ENCODE measurements at regions of chr6 and their contacts with region 1.

Region 1: DNA sequence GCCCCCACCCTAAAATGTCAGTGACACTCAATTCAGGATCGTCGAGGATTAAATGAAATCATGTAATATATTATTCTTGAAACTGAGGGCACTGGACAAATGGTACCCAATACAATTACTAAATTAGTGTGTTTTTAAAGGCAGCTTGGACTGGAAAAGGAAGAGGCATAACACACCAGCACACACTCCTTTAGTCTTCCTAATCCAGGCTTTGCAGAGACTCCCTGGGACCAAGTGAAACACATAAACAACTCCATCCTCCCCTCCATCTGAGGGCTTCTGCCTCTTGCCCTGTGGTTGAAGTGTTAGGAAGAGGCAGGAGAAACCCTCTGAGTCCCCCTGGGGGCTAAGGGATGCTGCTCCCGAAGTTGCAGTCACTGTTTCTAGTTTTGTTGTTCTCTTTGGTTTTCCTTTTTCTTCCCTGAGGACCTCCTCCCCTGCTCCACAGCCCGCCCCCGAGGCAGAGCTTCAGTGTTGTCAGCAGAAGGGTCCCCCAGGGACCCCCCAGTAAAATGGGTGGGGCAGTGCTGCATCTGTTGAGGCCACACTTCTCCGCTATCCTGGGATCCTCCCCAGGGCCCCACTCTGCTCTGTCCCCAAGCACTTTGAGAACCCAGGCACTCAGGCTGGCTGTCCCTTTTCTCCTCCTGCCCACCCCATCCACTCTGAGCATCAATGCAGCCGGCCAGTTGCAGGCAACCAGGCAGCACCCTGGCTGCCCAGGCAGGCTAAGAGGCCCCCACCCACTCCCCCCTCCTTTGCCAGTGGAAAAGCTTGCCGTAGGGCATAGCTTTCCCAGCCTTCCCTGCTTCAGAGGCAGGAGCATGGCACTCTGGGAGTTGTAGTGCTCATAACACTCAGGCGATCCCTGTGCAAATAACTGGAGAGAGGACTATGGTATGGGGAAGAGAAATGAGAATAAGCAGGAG is 5.9 kb downstream of the TMEM63B start:
- DNase-seq: no peak
- ATAC-seq: peak; percentile 76
- H3K4me3 ChIP-seq: no peak overlapping the region
- H3K27ac ChIP-seq: no peak overlapping the region
- H3K4me1 ChIP-seq: peaks cover 4% of the 10 kb centered on the region; the same call in 1 of the 2 replicates
- H3K27me3 ChIP-seq: no peaks in the 10 kb centered on the region
- CTCF ChIP-seq: no peak
- EP300 ChIP-seq: no peak
- POLR2A ChIP-seq: no peak
- RAD21 ChIP-seq: no peak

Region 2: GRCh38 chr6:44122816-44123215 is 10.5 kb before region 1 on chr6:
- CTCF ChIA-PET with region 1: interaction called, 11 read pairs
- POLR2A ChIA-PET with region 1: interaction called, 3 read pairs
- RAD21 ChIA-PET with region 1: no interaction called
- SMC1A ChIA-PET with region 1: interaction called, 6 read pairs
- in situ Hi-C with region 1: no loop called
- intact Hi-C with region 1: no loop called
- DNase-seq: peak; percentile 25
- ATAC-seq: no peak
- H3K4me3 ChIP-seq: peak overlapping the region; percentile 46; the same call in 1 of the 2 replicates
- H3K27ac ChIP-seq: peak overlapping the region; percentile 31
- H3K4me1 ChIP-seq: peaks cover 33% of the 10 kb centered on the region
- H3K27me3 ChIP-seq: no peaks in the 10 kb centered on the region
- CTCF ChIP-seq: no peak
- EP300 ChIP-seq: no peak
- POLR2A ChIP-seq: no peak
- RAD21 ChIP-seq: no peak

Measured in GM12878 (cell line).